Naive thymus-derived CD8-positive, alpha-beta T cell (primary cell): ENCODE measurements at regions of chr13 and their contacts with region 1.

Region 1: GRCh38 chr13:114161644-114162532 is 17.2 kb upstream of the CFAP97D2 start:
- DNase-seq: peak in 4 of 10 donors; percentile 24 to 52 (median 40)
- ATAC-seq: peak; percentile 77 to 78
- H3K4me3 Mint-ChIP-seq: peak overlapping the region; percentile 54 to 87 (median 76)
- H3K27ac Mint-ChIP-seq: peak overlapping the region; percentile 60 to 99 (median 94)
- H3K4me1 Mint-ChIP-seq: peaks cover 38 to 93% (median 85%) of the 10 kb centered on the region in 4 donors
- H3K27me3 Mint-ChIP-seq: no peaks in the 10 kb centered on the region

Region 2: DNA sequence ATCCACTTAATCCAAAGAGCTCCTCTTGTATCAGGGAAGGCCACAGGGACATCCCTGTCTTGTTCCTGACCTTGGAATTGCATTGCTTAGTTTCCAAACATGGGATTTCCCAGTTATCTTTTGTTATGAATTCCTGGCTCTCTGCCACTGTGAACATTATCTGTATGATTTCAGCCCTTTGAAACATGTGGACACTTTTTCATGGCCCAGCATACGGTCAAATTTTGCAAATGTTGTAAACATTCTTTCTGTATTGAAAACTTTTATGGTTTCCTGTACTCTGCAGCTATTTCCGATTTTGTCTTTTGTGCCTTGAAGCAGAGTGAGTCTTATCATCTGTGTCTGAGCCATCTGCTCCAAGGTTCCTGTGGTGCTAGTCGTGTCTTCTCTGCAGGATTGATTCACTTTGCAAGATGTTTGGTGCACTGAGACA is 12.7 kb after region 1 on chr13:
- POLR2A ChIA-PET with region 1: interaction called, 62 read pairs
- DNase-seq: no peak
- ATAC-seq: no peak
- H3K4me3 Mint-ChIP-seq: peak overlapping the region in 2 of 10 donors; percentile 22 to 27
- H3K27ac Mint-ChIP-seq: peak overlapping the region in 7 of 10 donors; percentile 5 to 66 (median 30)
- H3K4me1 Mint-ChIP-seq: peaks cover 10 to 48% (median 35%) of the 10 kb centered on the region in 4 donors
- H3K27me3 Mint-ChIP-seq: no peaks in the 10 kb centered on the region